GM12878 (cell line): ENCODE measurements at regions of chr7 and their contacts with region 1.

Region 1: DNA sequence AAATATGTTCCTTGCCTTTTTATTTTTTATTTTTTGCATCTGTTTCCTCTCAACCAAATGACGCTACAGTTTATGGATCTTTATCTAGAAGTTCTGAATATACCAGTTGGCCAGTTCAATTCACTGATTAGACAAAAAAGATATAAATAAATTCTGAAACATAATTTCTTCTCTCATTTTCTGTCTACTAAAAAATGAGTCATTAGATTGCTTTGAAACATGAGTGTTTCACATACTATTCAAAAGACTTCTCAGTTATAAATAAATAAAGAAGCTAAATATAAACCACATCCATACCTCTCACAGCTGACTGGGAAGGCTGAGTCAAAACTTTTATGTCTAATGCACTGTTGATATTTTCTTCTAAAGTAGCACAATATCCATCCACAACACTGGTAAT is 97.6 kb upstream of the GPR22 start:
- DNase-seq: no peak
- ATAC-seq: no peak
- H3K4me3 ChIP-seq: no peak overlapping the region
- H3K27ac ChIP-seq: no peak overlapping the region
- H3K4me1 ChIP-seq: no peaks in the 10 kb centered on the region
- H3K27me3 ChIP-seq: no peaks in the 10 kb centered on the region
- CTCF ChIP-seq: no peak
- EP300 ChIP-seq: no peak
- POLR2A ChIP-seq: no peak
- RAD21 ChIP-seq: no peak

Region 2: DNA sequence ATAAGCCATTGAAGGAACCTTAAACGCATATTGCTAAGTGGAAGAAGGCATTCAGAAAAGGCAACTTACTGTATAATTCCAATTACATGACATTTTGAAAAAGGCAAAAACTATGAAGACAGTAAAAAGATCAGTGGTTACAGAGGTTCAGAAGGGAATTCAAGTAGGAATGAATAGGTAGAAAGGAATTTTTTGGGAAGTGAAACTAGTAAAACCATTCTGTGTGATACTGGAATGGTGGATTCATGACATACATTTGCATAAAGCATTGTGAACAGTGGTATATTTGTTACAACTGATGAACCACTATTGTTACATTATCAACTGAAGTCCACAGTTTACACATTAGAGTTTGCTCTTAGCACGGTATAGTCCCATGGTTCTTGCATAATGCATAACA is 16.7 kb before region 1 on chr7:
- CTCF ChIA-PET with region 1: no interaction called
- POLR2A ChIA-PET with region 1: no interaction called
- RAD21 ChIA-PET with region 1: no interaction called
- SMC1A ChIA-PET with region 1: interaction called, 11 read pairs
- in situ Hi-C with region 1: no loop called
- intact Hi-C with region 1: no loop called
- DNase-seq: no peak
- ATAC-seq: no peak
- H3K4me3 ChIP-seq: no peak overlapping the region
- H3K27ac ChIP-seq: no peak overlapping the region
- H3K4me1 ChIP-seq: no peaks in the 10 kb centered on the region
- H3K27me3 ChIP-seq: no peaks in the 10 kb centered on the region
- CTCF ChIP-seq: no peak
- EP300 ChIP-seq: no peak
- POLR2A ChIP-seq: no peak
- RAD21 ChIP-seq: no peak

Region 3: DNA sequence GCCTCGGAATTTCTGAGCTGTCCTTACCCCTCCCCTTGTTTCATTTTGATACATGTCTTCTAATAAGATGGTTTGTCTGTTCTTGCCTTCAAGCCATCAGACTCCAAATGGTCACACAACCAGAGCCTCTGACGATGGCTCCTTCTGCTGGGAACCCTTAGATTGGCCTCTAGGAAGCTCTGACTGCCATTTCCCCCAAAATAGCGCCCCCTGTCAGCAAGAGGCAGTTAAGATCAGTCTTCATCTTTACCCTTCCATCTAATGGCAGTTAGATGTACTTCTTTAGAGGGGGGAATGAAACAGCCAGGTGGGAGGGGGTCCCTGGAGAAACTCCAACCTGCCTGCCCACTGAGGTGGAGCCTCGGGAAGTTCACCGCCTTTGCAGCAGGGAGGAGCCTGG is 11.7 kb after region 1 on chr7:
- CTCF ChIA-PET with region 1: interaction called, 18 read pairs
- POLR2A ChIA-PET with region 1: interaction called, 3 read pairs
- RAD21 ChIA-PET with region 1: no interaction called
- SMC1A ChIA-PET with region 1: no interaction called
- in situ Hi-C with region 1: no loop called
- intact Hi-C with region 1: no loop called
- DNase-seq: no peak
- ATAC-seq: 0 out of 3 replicates have a peak, but pooled peaks have one; percentile 46
- H3K4me3 ChIP-seq: no peak overlapping the region
- H3K27ac ChIP-seq: no peak overlapping the region
- H3K4me1 ChIP-seq: no peaks in the 10 kb centered on the region
- H3K27me3 ChIP-seq: no peaks in the 10 kb centered on the region
- CTCF ChIP-seq: peak; percentile 13 to 42 (median 16); a peak in 2 of 6 replicates
- EP300 ChIP-seq: no peak
- POLR2A ChIP-seq: no peak
- RAD21 ChIP-seq: peak; percentile 27; the same call in 1 of the 2 replicates